Caco-2 (cell line): ENCODE measurements at regions of chr14 and their contacts with region 1.

Region 1: GRCh38 chr14:104078031-104078455 is 7.5 kb upstream of the ASPG start:
- DNase-seq: peak; percentile 90
- H3K4me3 ChIP-seq: no peak overlapping the region
- H3K4me3 Mint-ChIP-seq: no peak overlapping the region
- H3K27ac Mint-ChIP-seq: no peak overlapping the region
- H3K4me1 ChIP-seq: 0 out of 2 replicates have a peak, but pooled peaks cover 3% of the 10 kb centered on the region
- H3K4me1 Mint-ChIP-seq: no peaks in the 10 kb centered on the region
- H3K27me3 ChIP-seq: no peaks in the 10 kb centered on the region; the same call in 1 of the 2 replicates
- H3K27me3 Mint-ChIP-seq: peaks cover 3% of the 10 kb centered on the region
- CTCF ChIP-seq: peak; percentile 97 to 99

Region 2: DNA sequence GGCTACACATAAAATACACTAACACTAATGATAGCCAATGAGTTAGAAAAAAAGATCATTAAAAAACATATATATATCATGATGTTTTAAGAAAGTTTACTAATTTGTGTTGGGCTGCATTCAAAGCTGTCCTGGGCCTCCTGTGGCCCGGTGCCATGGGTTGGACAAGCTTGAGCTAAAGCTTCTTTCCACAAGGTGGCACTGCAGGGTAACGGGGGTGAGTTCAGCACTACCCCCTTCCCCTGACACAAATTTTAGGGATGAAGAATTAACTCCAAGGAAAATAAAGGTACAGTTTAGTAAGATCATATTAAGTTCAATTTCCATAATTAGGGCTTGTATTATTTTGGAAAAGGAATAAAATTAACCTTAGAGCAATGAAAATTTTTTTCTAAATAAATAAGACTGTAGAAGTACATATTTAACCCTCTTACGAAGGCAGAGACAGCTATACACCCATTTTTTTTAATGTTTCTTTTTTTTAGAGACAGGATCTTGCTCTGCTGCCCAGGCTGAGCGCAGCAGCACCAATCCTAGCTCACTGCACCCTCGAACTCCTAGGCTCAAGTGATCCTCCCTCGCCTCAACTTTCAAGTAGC is 269.5 kb before region 1 on chr14:
- CTCF ChIA-PET with region 1: interaction called, 6 read pairs
- POLR2A ChIA-PET with region 1: no interaction called
- intact Hi-C with region 1: loop called (anchors 1 kb)
- DNase-seq: peak; percentile 69 to 85
- H3K4me3 ChIP-seq: no peak overlapping the region
- H3K4me3 Mint-ChIP-seq: no peak overlapping the region
- H3K27ac Mint-ChIP-seq: no peak overlapping the region
- H3K4me1 ChIP-seq: no peaks in the 10 kb centered on the region
- H3K4me1 Mint-ChIP-seq: no peaks in the 10 kb centered on the region
- H3K27me3 ChIP-seq: no peaks in the 10 kb centered on the region
- H3K27me3 Mint-ChIP-seq: no peaks in the 10 kb centered on the region
- CTCF ChIP-seq: peak; percentile 87 to 90

Region 3: GRCh38 chr14:104130974-104131651 is 53.1 kb after region 1 on chr14:
- CTCF ChIA-PET with region 1: interaction called, 7 read pairs
- POLR2A ChIA-PET with region 1: no interaction called
- intact Hi-C with region 1: loop called (anchors 1 kb)
- DNase-seq: peak; percentile 40 to 54
- H3K4me3 ChIP-seq: no peak overlapping the region
- H3K4me3 Mint-ChIP-seq: no peak overlapping the region
- H3K27ac Mint-ChIP-seq: no peak overlapping the region
- H3K4me1 ChIP-seq: peaks cover 7% of the 10 kb centered on the region
- H3K4me1 Mint-ChIP-seq: no peaks in the 10 kb centered on the region
- H3K27me3 ChIP-seq: peaks cover 1% of the 10 kb centered on the region; the same call in 1 of the 2 replicates
- H3K27me3 Mint-ChIP-seq: peaks cover 18% of the 10 kb centered on the region
- CTCF ChIP-seq: peak; percentile 61 to 69

Region 4: GRCh38 chr14:104370256-104370870 is 292.3 kb after region 1 on chr14:
- CTCF ChIA-PET with region 1: no interaction called
- POLR2A ChIA-PET with region 1: no interaction called
- intact Hi-C with region 1: loop called (anchors 5 kb)
- DNase-seq: peak; percentile 44 to 58
- H3K4me3 ChIP-seq: no peak overlapping the region
- H3K4me3 Mint-ChIP-seq: no peak overlapping the region
- H3K27ac Mint-ChIP-seq: no peak overlapping the region
- H3K4me1 ChIP-seq: no peaks in the 10 kb centered on the region
- H3K4me1 Mint-ChIP-seq: no peaks in the 10 kb centered on the region
- H3K27me3 ChIP-seq: no peaks in the 10 kb centered on the region
- H3K27me3 Mint-ChIP-seq: peaks cover 23% of the 10 kb centered on the region
- CTCF ChIP-seq: peak; percentile 22 to 75

Region 5: DNA sequence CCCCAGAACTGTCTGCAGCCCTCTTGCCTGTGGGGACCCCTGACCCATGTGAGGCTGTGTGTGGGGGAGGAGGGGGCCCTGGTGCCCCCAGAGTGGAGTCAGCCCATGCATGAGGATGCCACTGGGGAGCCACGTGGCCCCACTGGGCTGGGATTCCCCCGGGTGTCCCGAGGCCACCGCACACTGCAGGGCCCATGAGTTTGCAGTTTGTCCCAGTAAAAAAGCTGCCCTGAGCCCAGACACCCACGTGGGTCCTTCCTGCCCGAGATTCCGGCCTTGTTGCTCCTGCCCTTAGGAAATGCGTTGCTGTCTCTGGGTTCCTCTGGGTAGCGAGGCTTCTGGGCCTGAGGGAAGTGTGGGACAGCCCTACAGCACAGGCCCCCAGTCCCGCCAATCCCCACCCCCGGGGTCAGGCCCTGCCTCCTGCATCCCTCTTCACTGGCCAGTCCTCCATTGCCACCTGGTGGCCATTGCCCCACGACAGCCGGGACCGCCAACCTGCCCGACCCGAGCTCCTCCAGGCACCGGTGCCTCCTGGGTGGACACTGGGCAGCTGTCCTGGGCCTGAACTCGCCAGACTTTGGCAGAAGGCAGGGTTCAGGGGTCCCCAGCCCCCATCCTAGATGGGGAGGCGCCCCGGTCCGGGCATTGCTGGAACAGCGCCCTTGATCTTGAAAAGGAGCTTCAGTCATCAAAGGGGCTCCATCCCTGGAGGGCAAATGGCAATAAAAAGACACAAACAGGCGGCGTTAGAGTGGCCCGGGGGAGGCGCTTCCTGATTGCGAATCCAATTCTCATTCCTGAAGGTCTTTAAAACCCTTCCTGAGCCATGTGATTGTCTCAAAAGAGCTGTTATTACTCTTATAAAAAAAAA is 485.9 kb after region 1 on chr14:
- CTCF ChIA-PET with region 1: interaction called, 16 read pairs
- POLR2A ChIA-PET with region 1: no interaction called
- intact Hi-C with region 1: loop called (anchors 1 kb)
- DNase-seq: peak; percentile 79 to 85
- H3K4me3 ChIP-seq: no peak overlapping the region
- H3K4me3 Mint-ChIP-seq: no peak overlapping the region
- H3K27ac Mint-ChIP-seq: no peak overlapping the region
- H3K4me1 ChIP-seq: peaks cover 3% of the 10 kb centered on the region
- H3K4me1 Mint-ChIP-seq: no peaks in the 10 kb centered on the region
- H3K27me3 ChIP-seq: 0 out of 2 replicates have a peak, but pooled peaks cover 1% of the 10 kb centered on the region
- H3K27me3 Mint-ChIP-seq: peaks cover 17% of the 10 kb centered on the region
- CTCF ChIP-seq: peak; percentile 68 to 83

Region 6: GRCh38 chr14:104639889-104640548 is 562.0 kb after region 1 on chr14:
- CTCF ChIA-PET with region 1: no interaction called
- POLR2A ChIA-PET with region 1: no interaction called
- intact Hi-C with region 1: loop called (anchors 1 kb)
- DNase-seq: peak; percentile 67 to 81
- H3K4me3 ChIP-seq: no peak overlapping the region
- H3K4me3 Mint-ChIP-seq: no peak overlapping the region
- H3K27ac Mint-ChIP-seq: no peak overlapping the region
- H3K4me1 ChIP-seq: peaks cover 7% of the 10 kb centered on the region
- H3K4me1 Mint-ChIP-seq: peaks cover 14% of the 10 kb centered on the region
- H3K27me3 ChIP-seq: no peaks in the 10 kb centered on the region; the same call in 1 of the 2 replicates
- H3K27me3 Mint-ChIP-seq: peaks cover 20% of the 10 kb centered on the region
- CTCF ChIP-seq: peak; percentile 90 to 92